ENCODE measurements at regions of chr4 and their contacts with region 1.

Region 1: DNA sequence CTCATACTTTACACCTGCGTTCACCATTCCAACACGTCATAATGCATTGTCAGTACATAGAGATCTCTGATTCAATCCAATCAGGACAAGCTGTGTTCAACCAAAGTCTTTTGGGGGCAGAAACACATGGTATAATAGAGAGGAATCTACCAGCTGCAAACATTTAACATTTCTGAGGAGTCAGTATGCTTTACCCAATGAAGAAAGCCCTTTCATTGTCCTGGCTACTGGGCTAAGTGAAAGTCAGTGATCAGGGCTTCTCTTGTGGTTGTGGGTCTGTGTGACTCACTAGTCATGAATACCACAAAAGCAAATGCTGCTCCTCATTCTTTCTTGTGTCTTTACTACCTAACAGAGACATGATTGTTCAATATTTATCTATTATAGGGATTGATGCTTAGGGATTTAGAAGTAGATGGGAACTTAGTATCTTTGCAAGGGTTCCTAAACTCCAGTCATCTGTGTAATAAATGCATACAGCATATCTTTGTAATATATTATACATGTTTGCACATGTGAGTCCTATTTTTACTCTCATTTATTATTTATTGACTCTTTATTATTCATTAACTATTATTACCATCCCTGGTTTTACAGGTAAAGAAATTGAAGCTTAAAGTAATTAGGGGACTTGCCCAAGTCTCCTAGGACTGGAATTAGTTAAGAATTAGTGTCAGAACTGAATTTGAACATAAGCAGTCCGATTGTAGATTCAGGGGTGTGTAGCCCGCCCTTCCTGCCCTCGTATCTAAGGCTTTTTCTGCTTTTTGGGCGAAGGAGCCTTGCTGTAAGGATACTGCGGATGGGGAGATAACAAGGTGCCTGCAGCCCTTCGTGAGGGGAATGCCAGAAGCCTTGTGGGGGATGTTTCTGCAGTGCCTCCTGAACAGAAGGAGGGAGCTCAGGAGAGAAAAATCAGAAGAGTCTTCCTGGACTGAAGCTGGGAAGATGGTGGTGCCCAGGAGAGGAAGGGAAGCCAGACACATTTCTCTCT is 353.1 kb upstream of the BOD1L1 start:
- DNase-seq: no peak
- ATAC-seq: no peak
- H3K4me3 ChIP-seq: no peak overlapping the region
- H3K27ac ChIP-seq: no peak overlapping the region
- H3K4me1 ChIP-seq: peaks cover 22% of the 10 kb centered on the region
- H3K27me3 ChIP-seq: no peaks in the 10 kb centered on the region; a peak in 1 of 5 replicates
- CTCF ChIP-seq: no peak
- EP300 ChIP-seq: no peak
- POLR2A ChIP-seq: no peak
- RAD21 ChIP-seq: no peak

Region 2: DNA sequence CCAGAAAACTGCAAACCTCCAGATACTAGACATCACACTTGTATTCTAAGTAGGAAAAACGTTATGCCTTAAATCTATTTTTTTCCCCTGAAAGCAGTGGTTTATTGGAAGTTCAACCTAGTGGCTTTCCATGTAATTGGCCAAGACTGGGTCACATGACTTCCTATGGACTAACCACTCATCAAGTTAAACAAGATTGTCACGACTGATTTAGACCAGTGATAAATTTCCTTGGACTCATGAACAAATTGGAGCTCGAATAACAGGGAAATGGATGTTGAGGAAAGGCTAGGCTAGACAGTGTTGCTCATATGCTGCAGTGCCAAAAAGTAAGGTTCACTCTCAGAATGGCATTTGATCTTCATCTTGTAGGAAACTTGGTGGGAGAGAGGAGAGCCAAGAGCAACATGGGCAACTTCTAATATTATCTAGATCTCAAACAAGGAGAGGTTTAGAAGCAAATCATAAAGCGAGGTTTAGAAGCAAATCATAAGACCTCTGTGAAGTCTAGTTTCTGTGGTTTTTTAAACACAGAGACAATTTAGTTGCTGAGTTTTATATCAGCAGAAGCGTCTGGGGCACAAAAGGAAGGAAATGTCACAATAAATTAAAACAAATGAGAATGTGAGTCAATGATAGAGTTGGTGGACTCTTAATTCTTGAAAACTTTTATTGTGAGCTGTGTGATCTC is 187.4 kb before region 1 on chr4:
- CTCF ChIA-PET with region 1: no interaction called
- POLR2A ChIA-PET with region 1: no interaction called
- in situ Hi-C with region 1: no loop called
- intact Hi-C with region 1: no loop called
- DNase-seq: no peak
- ATAC-seq: no peak
- H3K4me3 ChIP-seq: no peak overlapping the region
- H3K27ac ChIP-seq: no peak overlapping the region
- H3K4me1 ChIP-seq: no peaks in the 10 kb centered on the region
- H3K27me3 ChIP-seq: no peaks in the 10 kb centered on the region
- CTCF ChIP-seq: no peak
- EP300 ChIP-seq: no peak
- POLR2A ChIP-seq: no peak
- RAD21 ChIP-seq: no peak

Region 3: DNA sequence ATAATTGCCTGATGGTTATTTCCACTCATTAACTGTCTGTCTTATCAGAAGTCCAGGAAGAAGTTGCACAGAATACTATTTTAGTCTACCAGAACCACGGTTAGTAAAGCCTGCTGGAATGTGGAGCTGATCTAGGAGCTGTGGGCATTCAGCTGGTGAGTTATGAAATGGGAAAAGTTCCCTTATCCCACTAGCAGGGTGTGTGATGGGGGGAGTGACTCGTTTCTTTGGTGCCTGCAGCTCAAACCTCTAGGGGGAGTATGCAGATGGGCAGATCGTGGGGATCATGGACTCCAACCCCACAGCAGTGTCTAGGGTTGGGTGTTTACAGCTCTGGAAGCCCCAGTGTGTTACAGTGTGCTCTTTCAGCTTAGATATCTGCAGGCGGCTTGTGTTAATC is 47.4 kb before region 1 on chr4:
- CTCF ChIA-PET with region 1: no interaction called
- POLR2A ChIA-PET with region 1: no interaction called
- in situ Hi-C with region 1: no loop called
- intact Hi-C with region 1: no loop called
- DNase-seq: no peak
- ATAC-seq: no peak; the same call in 2 of the 3 replicates
- H3K4me3 ChIP-seq: no peak overlapping the region
- H3K27ac ChIP-seq: no peak overlapping the region
- H3K4me1 ChIP-seq: no peaks in the 10 kb centered on the region
- H3K27me3 ChIP-seq: no peaks in the 10 kb centered on the region
- CTCF ChIP-seq: 0 out of 2 replicates have a peak, but pooled peaks have one; percentile 7
- EP300 ChIP-seq: no peak
- POLR2A ChIP-seq: no peak
- RAD21 ChIP-seq: no peak

Region 4: GRCh38 chr4:13953083-13953482 is 27.5 kb before region 1 on chr4:
- CTCF ChIA-PET with region 1: no interaction called
- POLR2A ChIA-PET with region 1: no interaction called
- in situ Hi-C with region 1: no loop called
- intact Hi-C with region 1: no loop called
- DNase-seq: no peak
- ATAC-seq: peak; percentile 100
- H3K4me3 ChIP-seq: no peak overlapping the region
- H3K27ac ChIP-seq: no peak overlapping the region
- H3K4me1 ChIP-seq: no peaks in the 10 kb centered on the region
- H3K27me3 ChIP-seq: no peaks in the 10 kb centered on the region
- CTCF ChIP-seq: peak; percentile 62
- EP300 ChIP-seq: no peak
- POLR2A ChIP-seq: no peak
- RAD21 ChIP-seq: peak; percentile 23; the same call in 1 of the 2 replicates

Region 5: DNA sequence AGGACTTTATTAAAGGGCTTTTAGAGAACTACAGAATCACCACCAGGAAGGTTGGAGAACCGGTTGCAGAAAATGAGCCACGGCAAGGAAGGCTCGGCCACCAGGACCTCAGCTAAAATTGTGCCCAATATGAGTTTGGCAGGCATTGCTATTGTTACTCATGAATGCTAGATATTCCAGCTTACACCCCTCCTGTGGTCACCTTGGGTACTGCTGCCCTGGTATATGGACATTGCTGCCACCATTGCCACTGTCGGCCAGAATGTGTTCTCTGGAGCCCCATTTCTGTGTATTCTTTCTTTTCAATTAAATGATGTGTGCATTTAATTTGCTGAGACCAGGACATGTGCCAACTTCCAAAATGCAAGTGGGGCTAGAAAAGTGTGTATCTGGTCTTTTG is 273.6 kb after region 1 on chr4:
- CTCF ChIA-PET with region 1: no interaction called
- POLR2A ChIA-PET with region 1: no interaction called
- in situ Hi-C with region 1: no loop called
- intact Hi-C with region 1: loop called (anchors 5 kb)
- DNase-seq: no peak
- ATAC-seq: peak; percentile 83
- H3K4me3 ChIP-seq: no peak overlapping the region
- H3K27ac ChIP-seq: no peak overlapping the region
- H3K4me1 ChIP-seq: no peaks in the 10 kb centered on the region
- H3K27me3 ChIP-seq: no peaks in the 10 kb centered on the region
- CTCF ChIP-seq: no peak; the same call in 1 of the 2 replicates
- EP300 ChIP-seq: no peak
- POLR2A ChIP-seq: no peak
- RAD21 ChIP-seq: no peak